CD14-positive monocyte (primary cell): ENCODE measurements at regions of chr12 and their contacts with region 1.

Region 1: DNA sequence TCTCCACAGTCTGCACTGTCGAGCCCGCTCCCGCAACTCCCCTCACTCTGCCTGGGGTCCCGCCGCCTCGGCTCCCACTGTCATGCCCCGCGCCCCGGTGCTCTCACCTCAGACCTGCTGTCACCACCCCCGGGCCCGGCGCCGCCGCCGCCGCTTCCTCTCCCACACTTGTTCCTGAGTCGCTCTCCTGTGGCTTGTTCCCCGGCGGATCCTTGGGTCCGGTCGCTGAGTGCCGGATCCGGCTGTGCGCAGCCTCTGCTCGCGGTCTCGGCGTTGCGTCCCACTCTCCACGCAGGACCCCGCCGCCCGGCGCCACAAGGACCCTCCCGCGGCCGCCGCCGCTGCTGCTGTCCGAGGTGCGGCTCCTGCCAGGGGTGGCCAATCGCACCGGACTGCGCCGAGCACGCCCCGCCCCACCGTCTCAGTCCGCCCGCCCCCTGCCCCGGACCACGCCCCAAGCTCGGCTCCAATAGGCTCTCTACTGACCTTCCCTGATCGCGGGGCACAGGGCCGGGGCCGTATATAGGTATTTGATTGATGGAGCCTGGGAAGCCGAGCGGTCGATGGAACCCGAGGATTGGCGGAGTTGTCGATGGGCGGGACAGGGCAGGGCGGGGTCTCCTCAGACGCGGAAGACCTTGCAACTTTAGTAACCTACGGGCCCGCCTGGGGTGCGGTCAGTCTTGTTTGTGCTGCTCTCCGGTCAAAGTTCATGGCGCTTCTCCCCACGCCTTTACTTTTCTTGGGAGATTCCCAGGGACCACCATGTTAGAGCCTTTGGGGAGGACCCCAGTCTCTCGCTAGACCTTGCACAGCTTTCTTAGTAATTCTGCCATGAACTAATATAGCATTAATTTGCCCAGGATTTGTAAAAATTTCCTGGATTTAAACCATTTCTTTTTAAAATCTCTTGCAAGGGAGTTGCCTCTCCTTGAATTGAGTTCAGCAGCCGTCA is at the start of gene TAOK3:
- DNase-seq: peak; percentile 98
- H3K4me3 ChIP-seq: peak within 1 kb of the TSS; percentile 89 to 96 (median 94)
- H3K4me3 Mint-ChIP-seq: peak within 1 kb of the TSS; percentile 98 to 99
- H3K27ac ChIP-seq: peak within 1 kb of the TSS; percentile 68 to 89
- H3K27ac Mint-ChIP-seq: peak within 1 kb of the TSS; percentile 86 to 96 (median 95)
- H3K4me1 ChIP-seq: peaks cover 46 to 63% of the 10 kb centered on the region in 2 donors
- H3K4me1 Mint-ChIP-seq: peaks cover 47% of the 10 kb centered on the region
- H3K27me3 ChIP-seq: no peaks in the 10 kb centered on the region
- H3K27me3 Mint-ChIP-seq: no peaks in the 10 kb centered on the region
- CTCF ChIP-seq: no peak
- polyA plus RNA-seq, gene TAOK3: 19.7 to 58.3 (median 44.8) TPM

Region 2: GRCh38 chr12:117998719-117999118 is 374.1 kb before region 1 on chr12:
- intact Hi-C with region 1: no loop called
- DNase-seq: no peak
- H3K4me3 ChIP-seq: no peak overlapping the region
- H3K4me3 Mint-ChIP-seq: no peak overlapping the region
- H3K27ac ChIP-seq: no peak overlapping the region
- H3K27ac Mint-ChIP-seq: no peak overlapping the region
- H3K4me1 ChIP-seq: no peaks in the 10 kb centered on the region
- H3K4me1 Mint-ChIP-seq: no peaks in the 10 kb centered on the region
- H3K27me3 ChIP-seq: no peaks in the 10 kb centered on the region
- H3K27me3 Mint-ChIP-seq: peaks cover 7 to 10% (median 9%) of the 10 kb centered on the region in 3 donors
- CTCF ChIP-seq: no peak

Region 3: DNA sequence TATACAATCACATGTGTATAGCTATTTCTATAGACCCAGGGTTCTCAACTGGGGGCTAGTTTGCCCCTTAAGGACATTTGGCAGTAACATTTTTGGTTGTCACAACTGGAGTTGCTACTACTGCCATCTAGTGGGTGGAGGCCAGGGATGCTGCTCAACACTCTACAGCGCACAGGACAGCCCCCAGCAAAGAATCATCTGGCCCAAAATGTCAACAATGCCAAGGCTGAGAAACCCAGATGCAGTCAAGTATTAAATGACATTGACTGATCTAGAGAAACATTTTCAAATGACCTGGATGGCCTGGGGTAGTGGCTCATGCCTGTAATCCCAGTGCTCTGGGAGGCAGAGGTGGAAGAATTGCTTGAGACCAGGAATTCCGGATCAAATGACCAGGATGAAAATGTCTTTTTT is 317.7 kb before region 1 on chr12:
- intact Hi-C with region 1: loop called (anchors 10 kb)
- DNase-seq: peak; percentile 37 to 45 (median 41)
- H3K4me3 ChIP-seq: no peak overlapping the region
- H3K4me3 Mint-ChIP-seq: no peak overlapping the region
- H3K27ac ChIP-seq: no peak overlapping the region
- H3K27ac Mint-ChIP-seq: peak overlapping the region in 2 of 7 donors; percentile 22 to 41
- H3K4me1 ChIP-seq: peaks cover 7 to 8% of the 10 kb centered on the region in 2 donors
- H3K4me1 Mint-ChIP-seq: peaks cover 15% of the 10 kb centered on the region
- H3K27me3 ChIP-seq: no peaks in the 10 kb centered on the region
- H3K27me3 Mint-ChIP-seq: peaks cover 0 to 2% (median 0%) of the 10 kb centered on the region in 3 donors
- CTCF ChIP-seq: peak; percentile 70

Region 4: DNA sequence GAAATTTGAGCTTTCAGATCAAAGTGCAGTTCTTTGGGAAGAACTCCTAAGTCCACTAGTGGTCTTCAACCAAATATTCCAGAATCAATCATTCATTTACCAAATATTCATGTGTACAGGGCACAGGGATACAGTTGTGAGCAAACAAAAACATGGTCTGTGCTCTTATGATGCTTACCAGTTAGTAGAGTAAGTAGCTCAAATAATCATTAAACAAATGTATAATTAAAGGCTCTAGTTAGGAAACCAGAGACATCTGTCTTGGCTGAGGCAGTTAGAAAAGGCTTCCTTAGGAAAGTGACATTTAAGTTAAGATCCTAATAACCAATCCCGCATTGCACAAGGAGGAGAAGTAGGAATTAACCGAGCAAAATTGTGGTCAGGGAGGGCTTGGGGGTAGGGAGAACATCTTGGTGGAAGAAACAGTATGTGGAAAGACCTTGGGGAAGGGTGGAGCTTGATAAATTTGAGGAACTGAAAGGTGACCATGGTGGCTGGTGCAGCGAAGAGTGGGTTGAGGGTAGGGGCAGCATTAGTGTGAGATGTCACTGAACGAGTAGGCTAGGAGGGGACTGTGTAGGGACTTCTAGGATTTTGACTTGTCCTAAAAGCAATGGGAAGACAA is 196.9 kb before region 1 on chr12:
- intact Hi-C with region 1: loop called (anchors 10 kb)
- DNase-seq: peak; percentile 58 to 87 (median 63)
- H3K4me3 ChIP-seq: peak overlapping the region in 1 of 3 experiments; percentile 22
- H3K4me3 Mint-ChIP-seq: peak overlapping the region in 1 of 2 donors; percentile 63
- H3K27ac ChIP-seq: peak overlapping the region in 1 of 2 donors; percentile 70
- H3K27ac Mint-ChIP-seq: peak overlapping the region; percentile 3 to 82 (median 72)
- H3K4me1 ChIP-seq: peaks cover 17 to 18% of the 10 kb centered on the region in 2 donors
- H3K4me1 Mint-ChIP-seq: peaks cover 18% of the 10 kb centered on the region
- H3K27me3 ChIP-seq: no peaks in the 10 kb centered on the region
- H3K27me3 Mint-ChIP-seq: no peaks in the 10 kb centered on the region
- CTCF ChIP-seq: no peak

Region 5: DNA sequence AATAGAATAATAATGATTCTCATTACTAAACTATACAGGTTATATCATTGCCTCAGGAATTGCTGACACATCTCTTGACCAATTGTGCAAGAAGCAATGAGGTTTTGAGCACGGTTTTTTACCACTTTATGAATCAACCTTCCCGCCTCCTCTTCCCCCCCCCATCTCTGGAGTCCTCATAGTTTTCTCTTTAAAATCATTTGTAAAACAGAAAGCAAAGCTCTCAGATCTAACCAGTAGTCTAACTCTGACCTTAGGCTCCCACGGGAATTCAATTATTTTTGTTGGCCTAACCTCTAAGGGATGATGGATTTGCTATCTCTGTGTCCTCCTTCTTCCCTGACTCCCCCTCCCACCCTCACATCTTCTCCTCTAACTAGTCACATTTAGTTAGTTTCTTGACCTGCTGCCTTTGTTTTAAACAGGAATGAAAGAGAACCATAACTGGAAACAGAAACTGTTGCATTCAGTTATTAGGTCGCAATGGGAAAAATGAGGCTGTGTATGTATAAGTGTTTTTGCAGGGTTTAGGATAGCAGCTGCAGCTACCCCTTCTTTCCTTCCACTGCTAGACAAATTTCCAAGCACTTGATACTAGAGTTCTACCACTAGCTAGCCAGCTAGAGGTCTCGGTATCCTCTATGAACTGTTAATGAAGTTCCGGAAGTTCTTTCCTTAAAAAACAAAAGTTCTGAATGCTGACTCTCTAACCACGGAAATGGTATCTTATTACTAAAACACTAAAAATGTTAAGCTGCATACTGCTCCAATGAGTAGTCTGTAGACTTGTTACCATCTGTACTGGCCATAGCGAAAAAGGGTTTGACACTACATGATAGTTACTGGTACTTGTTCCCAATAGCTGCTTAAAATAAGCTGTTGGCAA is 65.5 kb before region 1 on chr12:
- intact Hi-C with region 1: loop called (anchors 5 kb)
- DNase-seq: peak; percentile 71 to 85 (median 83)
- H3K4me3 ChIP-seq: peak overlapping the region; percentile 8 to 70 (median 59)
- H3K4me3 Mint-ChIP-seq: peak overlapping the region; percentile 71 to 75
- H3K27ac ChIP-seq: peak overlapping the region; percentile 13 to 81
- H3K27ac Mint-ChIP-seq: peak overlapping the region; percentile 86 to 94 (median 93)
- H3K4me1 ChIP-seq: peaks cover 26 to 40% of the 10 kb centered on the region in 2 donors
- H3K4me1 Mint-ChIP-seq: peaks cover 34% of the 10 kb centered on the region
- H3K27me3 ChIP-seq: no peaks in the 10 kb centered on the region
- H3K27me3 Mint-ChIP-seq: no peaks in the 10 kb centered on the region
- CTCF ChIP-seq: no peak

Region 6: DNA sequence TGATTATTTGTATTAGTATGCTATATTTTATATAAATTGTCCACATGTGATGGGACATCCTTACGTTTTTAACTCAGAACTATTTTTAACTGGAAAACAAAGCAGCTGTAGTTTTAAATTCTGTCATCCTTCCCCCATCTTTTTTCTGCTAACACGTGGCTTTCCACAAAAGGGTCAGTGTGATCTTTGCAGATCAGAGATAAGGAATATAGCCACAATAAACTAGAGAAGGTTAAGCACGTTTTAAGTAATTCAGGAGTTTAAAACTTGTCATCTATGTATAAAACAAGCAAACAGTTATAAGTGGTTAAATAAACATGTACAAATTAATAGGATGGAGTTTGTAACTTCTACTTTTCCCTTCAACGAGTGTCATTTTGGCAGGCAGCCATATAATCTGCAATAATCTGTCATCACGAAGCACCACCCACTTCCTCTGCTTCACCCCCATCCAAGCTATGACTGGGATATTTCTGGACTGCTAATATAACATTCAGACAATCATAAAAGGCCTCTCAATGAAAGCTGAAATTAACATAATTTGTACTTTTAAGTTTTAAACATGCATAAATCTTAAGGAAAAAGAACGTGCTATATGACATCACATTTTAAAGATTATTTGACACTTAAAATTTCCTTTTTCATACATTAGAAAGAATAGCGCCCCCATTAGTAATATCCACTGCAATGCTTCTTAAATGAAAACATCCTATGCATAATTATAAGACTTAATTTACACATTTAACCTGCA is 15.4 kb before region 1 on chr12:
- intact Hi-C with region 1: loop called in 1 of 2 experiments (anchors 1 kb)
- DNase-seq: peak; percentile 91 to 93 (median 92)
- H3K4me3 ChIP-seq: peak overlapping the region; percentile 25 to 69 (median 47)
- H3K4me3 Mint-ChIP-seq: peak overlapping the region; percentile 54 to 76
- H3K27ac ChIP-seq: peak overlapping the region; percentile 95 to 97
- H3K27ac Mint-ChIP-seq: peak overlapping the region; percentile 96 to 99 (median 99)
- H3K4me1 ChIP-seq: peaks cover 70 to 92% of the 10 kb centered on the region in 2 donors
- H3K4me1 Mint-ChIP-seq: peaks cover 77% of the 10 kb centered on the region
- H3K27me3 ChIP-seq: no peaks in the 10 kb centered on the region
- H3K27me3 Mint-ChIP-seq: no peaks in the 10 kb centered on the region
- CTCF ChIP-seq: peak; percentile 72